ENCODE measurements at regions of chr3 and their contacts with region 1.

Region 1: DNA sequence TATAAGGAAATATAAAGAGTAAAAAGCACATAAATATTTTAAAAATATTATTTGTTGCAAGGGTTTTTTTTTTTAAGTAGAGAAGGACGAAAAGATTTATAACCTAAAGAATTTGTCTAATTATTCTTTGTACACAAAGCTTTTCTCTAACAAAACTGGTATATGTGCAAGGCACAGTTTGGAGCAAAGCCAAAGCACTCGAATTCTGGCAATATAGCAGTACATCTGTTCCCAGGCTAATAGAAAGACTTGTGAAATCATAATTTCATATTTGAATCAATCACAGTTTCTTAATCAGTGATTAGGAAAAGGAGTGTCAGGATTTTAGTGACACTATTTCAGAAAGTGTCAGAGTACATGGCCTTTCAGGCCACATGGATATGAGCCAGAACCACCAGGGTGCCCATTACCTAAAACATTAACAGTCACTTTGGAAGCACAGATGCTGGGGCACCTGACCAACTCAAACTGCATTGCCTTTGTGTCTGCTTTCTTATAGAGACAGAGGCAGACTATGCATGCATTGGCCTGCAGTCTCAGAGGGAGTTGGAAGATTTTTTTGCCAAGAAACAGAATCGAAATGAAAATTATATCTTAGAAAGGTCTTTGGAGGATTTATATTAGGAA is 651.8 kb upstream of the SGO1 start:
- DNase-seq: no peak
- H3K4me3 ChIP-seq: no peak overlapping the region
- H3K27ac ChIP-seq: no peak overlapping the region
- H3K4me1 ChIP-seq: no peaks in the 10 kb centered on the region
- H3K27me3 ChIP-seq: no peaks in the 10 kb centered on the region
- CTCF ChIP-seq: no peak

Region 2: GRCh38 chr3:20849975-20850374 is 12.2 kb after region 1 on chr3:
- CTCF ChIA-PET with region 1: no interaction called
- POLR2A ChIA-PET with region 1: no interaction called
- intact Hi-C with region 1: no loop called
- DNase-seq: no peak
- H3K4me3 ChIP-seq: no peak overlapping the region
- H3K27ac ChIP-seq: no peak overlapping the region
- H3K4me1 ChIP-seq: no peaks in the 10 kb centered on the region
- H3K27me3 ChIP-seq: no peaks in the 10 kb centered on the region
- CTCF ChIP-seq: no peak

Region 3: GRCh38 chr3:21718161-21718765 is 880.5 kb after region 1 on chr3:
- CTCF ChIA-PET with region 1: no interaction called
- POLR2A ChIA-PET with region 1: no interaction called
- intact Hi-C with region 1: no loop called
- DNase-seq: peak; percentile 2 to 63
- H3K4me3 ChIP-seq: no peak overlapping the region
- H3K27ac ChIP-seq: no peak overlapping the region
- H3K4me1 ChIP-seq: no peaks in the 10 kb centered on the region
- H3K27me3 ChIP-seq: no peaks in the 10 kb centered on the region
- CTCF ChIP-seq: no peak

Region 4: GRCh38 chr3:21913791-21914190 is 1076.0 kb after region 1 on chr3:
- CTCF ChIA-PET with region 1: no interaction called
- POLR2A ChIA-PET with region 1: interaction called, 12 read pairs
- intact Hi-C with region 1: no loop called
- DNase-seq: no peak
- H3K4me3 ChIP-seq: no peak overlapping the region
- H3K27ac ChIP-seq: no peak overlapping the region
- H3K4me1 ChIP-seq: no peaks in the 10 kb centered on the region
- H3K27me3 ChIP-seq: no peaks in the 10 kb centered on the region
- CTCF ChIP-seq: no peak